CD8-positive, alpha-beta T cell (primary cell): ENCODE measurements at regions of chr12 and their contacts with region 1.

Region 1: DNA sequence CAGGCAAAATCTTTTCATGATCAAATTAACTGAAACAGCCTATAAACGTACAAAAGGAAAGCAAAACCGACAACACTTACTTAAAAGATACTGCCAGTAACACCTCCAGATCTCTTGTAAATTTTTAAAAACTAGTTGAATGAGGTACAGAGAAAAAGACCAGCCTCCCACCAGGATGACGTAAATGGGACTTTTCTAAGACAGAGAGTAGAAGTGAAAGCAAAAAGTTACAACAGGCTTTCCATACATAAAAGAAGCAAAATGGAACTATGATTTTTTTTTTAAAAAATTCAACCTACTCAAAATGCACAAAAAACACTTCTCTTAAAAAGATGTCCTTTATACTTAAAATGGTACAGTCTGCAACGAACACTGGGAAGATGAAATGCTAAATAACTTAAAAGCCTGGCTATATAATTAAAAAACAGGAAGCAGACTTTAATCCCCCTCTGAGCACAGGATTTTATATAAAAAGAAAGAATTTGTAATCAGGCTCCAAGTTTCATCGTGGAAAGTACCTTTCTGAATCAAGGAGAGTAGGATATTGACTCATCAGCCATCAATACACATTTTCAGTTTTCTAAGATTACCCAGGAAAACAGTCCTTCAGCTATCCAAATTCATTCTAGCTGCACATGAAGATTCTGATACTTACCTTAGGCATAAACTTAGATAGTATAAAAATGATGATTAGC is 14.2 kb upstream of the MYO1A start:
- DNase-seq: peak in 6 of 9 experiments; percentile 9 to 94 (median 58)
- ATAC-seq: peak; percentile 96
- H3K4me3 ChIP-seq: peak overlapping the region; percentile 19 to 37
- H3K4me3 Mint-ChIP-seq: peak overlapping the region; percentile 78
- H3K27ac ChIP-seq: peak overlapping the region; percentile 61 to 88
- H3K27ac Mint-ChIP-seq: peak overlapping the region; percentile 95
- H3K4me1 ChIP-seq: peaks cover 24% of the 10 kb centered on the region
- H3K4me1 Mint-ChIP-seq: peaks cover 28% of the 10 kb centered on the region
- H3K27me3 ChIP-seq: no peaks in the 10 kb centered on the region
- H3K27me3 Mint-ChIP-seq: no peaks in the 10 kb centered on the region
- CTCF ChIP-seq: no peak

Region 2: DNA sequence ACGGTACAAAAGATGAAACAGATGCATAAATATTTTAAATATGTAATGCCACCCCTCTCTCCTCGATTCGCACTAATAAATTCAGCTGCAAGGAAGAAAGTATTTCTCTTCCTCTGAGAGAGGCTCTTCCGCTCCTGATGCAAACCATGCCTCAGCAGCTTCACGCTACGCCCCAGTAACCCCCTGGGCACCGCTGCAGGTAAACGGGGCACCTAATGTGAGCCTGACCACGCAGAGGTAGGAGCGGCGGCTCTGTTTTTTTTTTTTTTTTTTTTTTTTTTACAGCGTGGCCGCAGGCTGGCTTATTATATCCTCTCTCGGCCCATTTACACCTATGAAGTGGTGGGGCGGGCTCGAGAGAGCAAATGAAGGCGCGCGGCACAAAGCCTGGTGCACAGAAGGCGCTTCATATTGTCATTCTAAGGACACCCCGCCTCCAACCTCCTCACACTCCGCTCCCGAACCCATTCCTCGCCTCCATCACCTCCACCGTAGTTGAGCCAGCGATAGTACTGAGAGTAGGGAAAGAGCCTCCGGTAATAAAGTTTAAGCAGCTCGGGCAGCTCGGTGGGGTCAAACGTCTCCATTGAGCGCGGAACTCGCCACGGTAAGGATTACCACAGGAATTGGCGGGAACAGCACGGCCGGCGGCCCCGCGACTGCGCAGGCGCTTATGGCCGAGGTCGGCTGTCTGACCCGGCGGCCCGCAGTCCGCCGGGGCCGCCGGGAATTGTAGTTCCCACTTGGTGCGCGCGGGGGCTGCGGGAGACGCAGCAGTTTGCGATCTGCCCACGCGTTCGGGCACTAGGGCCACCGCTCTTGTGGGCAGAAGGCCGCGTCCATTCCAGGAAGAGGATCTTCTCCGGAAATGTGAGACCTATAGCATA is 312.2 kb before region 1 on chr12 and contains the start of gene PRIM1:
- CTCF ChIA-PET with region 1: interaction called, 5 read pairs
- POLR2A ChIA-PET with region 1: no interaction called
- intact Hi-C with region 1: loop called (anchors 2 kb)
- DNase-seq: peak; percentile 58 to 89 (median 81)
- ATAC-seq: peak; percentile 81
- H3K4me3 ChIP-seq: peak within 1 kb of the TSS; percentile 91 to 99
- H3K4me3 Mint-ChIP-seq: peak within 1 kb of the TSS; percentile 97
- H3K27ac ChIP-seq: peak within 1 kb of the TSS; percentile 71 to 76
- H3K27ac Mint-ChIP-seq: peak within 1 kb of the TSS; percentile 86
- H3K4me1 ChIP-seq: peaks cover 11% of the 10 kb centered on the region
- H3K4me1 Mint-ChIP-seq: peaks cover 22% of the 10 kb centered on the region
- H3K27me3 ChIP-seq: no peaks in the 10 kb centered on the region
- H3K27me3 Mint-ChIP-seq: no peaks in the 10 kb centered on the region
- CTCF ChIP-seq: peak; percentile 23
- total RNA-seq, gene PRIM1: 5.0 to 5.8 TPM

Region 3: DNA sequence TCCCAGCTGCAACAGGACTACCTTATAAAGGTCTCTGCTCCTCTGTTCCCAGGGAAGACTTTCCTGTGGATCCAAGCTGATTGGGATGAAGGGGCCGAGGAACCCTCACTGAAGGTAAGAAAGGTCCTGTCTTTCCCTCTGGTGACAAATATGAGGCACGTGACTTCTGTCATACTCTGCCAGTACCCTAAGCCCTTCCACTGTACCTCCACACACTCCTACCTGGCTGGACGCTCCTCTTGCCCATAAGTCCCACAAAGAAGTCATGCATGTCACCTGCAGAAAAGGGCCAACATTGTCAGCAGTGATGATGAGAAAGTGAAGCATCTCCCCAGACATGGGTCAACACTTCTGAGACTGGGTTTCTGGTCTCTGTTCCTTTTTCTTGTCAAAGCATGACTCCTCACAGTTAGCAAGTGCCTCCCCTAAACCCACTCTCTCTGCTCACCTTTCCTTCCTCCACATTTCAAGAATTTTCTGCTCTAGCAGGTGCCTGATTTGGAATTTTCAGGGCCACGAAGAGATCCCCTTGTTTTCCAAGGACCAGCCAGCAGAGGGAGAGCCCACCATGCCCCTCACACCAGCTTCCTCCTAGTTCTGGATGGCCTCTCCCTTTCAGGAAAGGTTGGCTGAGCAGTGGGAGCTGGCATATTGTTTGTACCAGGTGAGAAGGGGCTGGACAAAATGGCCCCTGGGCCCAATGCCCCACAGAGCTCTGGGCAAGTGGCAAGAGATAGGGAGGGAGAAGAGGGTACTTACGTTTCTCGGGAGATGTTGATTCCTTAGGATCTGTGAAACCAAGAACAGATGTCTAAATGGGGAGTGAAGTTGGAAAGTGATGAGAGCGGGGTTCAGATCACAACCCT is 51.3 kb before region 1 on chr12:
- CTCF ChIA-PET with region 1: interaction called, 31 read pairs
- POLR2A ChIA-PET with region 1: interaction called, 7 read pairs
- intact Hi-C with region 1: loop called (anchors 1 kb)
- DNase-seq: no peak
- ATAC-seq: no peak
- H3K4me3 ChIP-seq: no peak overlapping the region
- H3K4me3 Mint-ChIP-seq: no peak overlapping the region
- H3K27ac ChIP-seq: no peak overlapping the region
- H3K27ac Mint-ChIP-seq: no peak overlapping the region
- H3K4me1 ChIP-seq: peaks cover 14% of the 10 kb centered on the region
- H3K4me1 Mint-ChIP-seq: peaks cover 16% of the 10 kb centered on the region
- H3K27me3 ChIP-seq: peaks cover 0 to 3% of the 10 kb centered on the region in 2 experiments
- H3K27me3 Mint-ChIP-seq: peaks cover 4% of the 10 kb centered on the region
- CTCF ChIP-seq: no peak

Region 4: DNA sequence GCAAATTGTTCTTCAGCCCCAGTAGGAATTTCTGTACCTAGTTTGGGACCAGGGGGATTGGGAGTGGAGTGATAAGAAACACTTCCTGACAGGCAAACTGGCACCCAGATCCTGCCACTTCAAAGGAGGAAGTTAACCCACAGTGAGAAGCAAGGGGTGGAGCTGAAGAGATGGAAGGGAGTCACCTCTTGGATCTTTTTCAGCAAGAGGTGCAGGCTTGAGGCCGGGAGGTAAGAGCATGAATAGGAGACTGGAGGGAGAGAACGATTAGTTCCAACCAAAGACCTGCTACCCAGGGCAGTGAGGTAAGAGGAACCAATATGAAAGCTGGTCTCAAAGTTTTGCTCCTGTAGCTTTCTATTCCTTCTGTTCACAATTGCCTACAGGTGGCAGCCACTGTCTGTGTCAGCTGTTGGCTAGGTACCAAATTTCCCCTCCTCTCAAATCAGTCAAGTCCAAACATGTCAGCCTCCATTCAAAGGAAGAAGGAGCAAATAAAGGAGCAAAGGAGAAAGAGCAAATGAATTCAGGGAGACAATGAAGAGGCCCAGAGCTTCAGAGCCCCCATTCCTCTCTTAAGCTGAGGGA is 32.9 kb before region 1 on chr12:
- CTCF ChIA-PET with region 1: interaction called, 11 read pairs
- POLR2A ChIA-PET with region 1: interaction called, 3 read pairs
- intact Hi-C with region 1: no loop called
- DNase-seq: peak in 3 of 9 experiments; percentile 8 to 48 (median 26)
- ATAC-seq: peak; percentile 38
- H3K4me3 ChIP-seq: no peak overlapping the region
- H3K4me3 Mint-ChIP-seq: peak overlapping the region; percentile 26
- H3K27ac ChIP-seq: no peak overlapping the region
- H3K27ac Mint-ChIP-seq: no peak overlapping the region
- H3K4me1 ChIP-seq: peaks cover 34% of the 10 kb centered on the region
- H3K4me1 Mint-ChIP-seq: peaks cover 35% of the 10 kb centered on the region
- H3K27me3 ChIP-seq: no peaks in the 10 kb centered on the region
- H3K27me3 Mint-ChIP-seq: no peaks in the 10 kb centered on the region
- CTCF ChIP-seq: no peak

Region 5: DNA sequence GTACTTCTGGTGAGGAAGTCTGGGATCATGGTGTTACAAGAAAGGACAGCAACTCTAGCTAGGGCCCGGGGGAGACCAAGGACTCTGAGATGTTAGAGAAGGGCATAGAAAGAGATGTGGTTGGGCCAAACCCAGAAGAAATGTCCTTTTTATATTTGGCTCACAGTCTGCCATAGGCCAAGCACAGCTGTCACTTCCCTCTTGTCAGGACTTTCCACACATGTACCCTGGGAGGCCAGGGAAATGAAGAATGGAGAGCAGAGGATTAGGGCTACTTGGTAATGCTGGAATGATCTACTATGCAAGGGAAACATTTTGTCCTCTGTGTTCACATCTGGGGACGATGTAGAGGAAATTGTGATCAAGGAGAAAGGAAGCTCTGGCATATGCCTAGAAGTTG is 23.4 kb before region 1 on chr12:
- CTCF ChIA-PET with region 1: interaction called, 11 read pairs
- POLR2A ChIA-PET with region 1: no interaction called
- intact Hi-C with region 1: no loop called
- DNase-seq: no peak
- ATAC-seq: no peak
- H3K4me3 ChIP-seq: no peak overlapping the region
- H3K4me3 Mint-ChIP-seq: no peak overlapping the region
- H3K27ac ChIP-seq: no peak overlapping the region
- H3K27ac Mint-ChIP-seq: no peak overlapping the region
- H3K4me1 ChIP-seq: no peaks in the 10 kb centered on the region
- H3K4me1 Mint-ChIP-seq: peaks cover under 1% of the 10 kb centered on the region
- H3K27me3 ChIP-seq: peaks cover 0 to 2% of the 10 kb centered on the region in 2 experiments
- H3K27me3 Mint-ChIP-seq: peaks cover 3% of the 10 kb centered on the region
- CTCF ChIP-seq: no peak

Region 6: DNA sequence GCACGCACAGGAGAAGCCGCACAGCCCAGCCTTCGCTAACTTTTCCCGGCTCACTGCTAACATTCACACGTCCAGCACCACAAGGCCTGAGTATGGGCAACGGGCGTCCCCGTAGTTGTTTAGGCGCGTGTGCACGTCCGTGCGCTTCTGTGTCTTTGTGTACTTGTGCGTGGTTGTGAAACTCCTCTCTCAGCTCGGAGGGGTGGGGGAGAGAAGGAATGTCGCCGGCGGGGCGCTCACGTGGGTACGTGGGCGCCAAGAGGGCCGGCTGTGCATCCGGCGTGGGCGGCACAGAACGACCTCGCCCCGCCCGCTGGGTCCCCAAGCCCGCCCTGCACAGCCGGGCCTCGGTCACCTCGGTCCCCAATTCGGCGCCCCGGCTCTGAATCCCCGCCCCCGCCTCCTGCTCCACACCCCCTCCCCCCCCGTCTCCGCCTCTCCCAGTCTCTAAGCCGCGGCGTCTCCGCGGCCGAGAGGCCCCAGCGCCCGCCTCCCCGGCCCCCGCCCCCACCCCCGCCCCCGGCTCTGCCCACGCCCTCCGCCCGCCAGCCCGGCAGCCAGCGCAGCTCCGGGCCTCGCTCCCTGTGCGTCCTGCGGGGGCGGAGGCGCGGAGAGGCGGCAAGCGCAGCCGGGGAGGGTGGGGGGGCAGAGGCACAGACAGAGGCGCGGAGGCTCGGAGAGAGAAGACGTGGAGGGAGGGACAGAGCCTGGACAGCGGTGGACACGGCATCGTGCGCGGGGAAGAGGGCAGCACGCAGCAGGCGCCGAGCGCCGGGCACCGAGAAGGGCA is 24.5 kb after region 1 on chr12 and contains the start of gene NAB2:
- CTCF ChIA-PET with region 1: interaction called, 76 read pairs
- POLR2A ChIA-PET with region 1: interaction called, 14 read pairs
- intact Hi-C with region 1: loop called (anchors 1 kb)
- DNase-seq: peak; percentile 87 to 97 (median 95)
- ATAC-seq: peak; percentile 60
- H3K4me3 ChIP-seq: peak within 1 kb of the TSS; percentile 87 to 95
- H3K4me3 Mint-ChIP-seq: peak within 1 kb of the TSS; percentile 92
- H3K27ac ChIP-seq: peak within 1 kb of the TSS; percentile 97 to 100
- H3K27ac Mint-ChIP-seq: peak within 1 kb of the TSS; percentile 95
- H3K4me1 ChIP-seq: peaks cover 47% of the 10 kb centered on the region
- H3K4me1 Mint-ChIP-seq: peaks cover 64% of the 10 kb centered on the region
- H3K27me3 ChIP-seq: no peaks in the 10 kb centered on the region
- H3K27me3 Mint-ChIP-seq: no peaks in the 10 kb centered on the region
- CTCF ChIP-seq: no peak
- total RNA-seq, gene NAB2: 5.9 to 6.7 TPM

Region 7: DNA sequence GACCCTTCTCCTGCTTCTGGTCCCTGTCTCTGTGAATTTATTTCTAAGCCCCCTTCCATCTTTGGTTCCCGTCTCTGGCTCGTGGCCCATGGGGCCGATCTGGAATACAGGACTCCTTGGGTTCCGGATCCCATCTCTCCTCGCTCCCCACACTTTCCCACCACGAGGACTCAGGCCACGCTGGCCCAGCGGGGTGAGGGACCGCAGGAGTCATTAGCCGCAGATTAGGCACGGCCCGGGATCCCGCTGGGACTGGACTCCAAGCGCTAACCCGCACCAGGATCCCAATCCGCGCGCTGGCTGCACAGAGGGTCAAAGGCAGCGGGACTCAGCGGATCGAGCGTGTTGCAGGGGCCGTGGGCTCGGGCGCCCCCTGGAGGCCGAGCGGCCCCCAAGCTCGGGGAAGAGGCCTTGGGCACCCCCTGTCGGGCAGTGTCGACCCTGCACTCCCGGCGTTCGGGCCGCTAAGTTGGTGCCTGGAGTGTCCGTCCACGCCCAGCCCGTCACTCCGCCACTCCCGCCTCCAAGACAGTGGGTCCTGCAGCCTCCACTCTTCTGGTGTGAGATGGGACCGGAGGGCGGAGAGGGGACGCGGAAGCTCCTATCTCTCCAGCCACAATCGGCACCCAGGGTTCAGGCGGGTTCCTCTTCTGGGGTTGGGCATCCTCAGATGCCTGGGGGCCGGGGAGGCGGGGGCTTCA is 174.9 kb after region 1 on chr12:
- CTCF ChIA-PET with region 1: interaction called, 6 read pairs
- POLR2A ChIA-PET with region 1: no interaction called
- intact Hi-C with region 1: loop called (anchors 1 to 10 kb)
- DNase-seq: peak; percentile 73 to 92 (median 86)
- ATAC-seq: peak; percentile 65
- H3K4me3 ChIP-seq: peak overlapping the region; percentile 64 to 78
- H3K4me3 Mint-ChIP-seq: peak overlapping the region; percentile 93
- H3K27ac ChIP-seq: no peak overlapping the region
- H3K27ac Mint-ChIP-seq: no peak overlapping the region
- H3K4me1 ChIP-seq: peaks cover 79% of the 10 kb centered on the region
- H3K4me1 Mint-ChIP-seq: peaks cover 64% of the 10 kb centered on the region
- H3K27me3 ChIP-seq: peaks cover 48 to 72% of the 10 kb centered on the region in 2 experiments
- H3K27me3 Mint-ChIP-seq: peaks cover 56% of the 10 kb centered on the region
- CTCF ChIP-seq: peak; percentile 100